ENCODE measurements at regions of chr1 and their contacts with region 1.

Region 1: GRCh38 chr1:117758444-117759316 is 152.8 kb downstream of the TENT5C start:
- DNase-seq: peak; percentile 85
- H3K4me3 ChIP-seq: peak overlapping the region; percentile 15 to 46 (median 42)
- H3K27ac ChIP-seq: no peak overlapping the region
- H3K4me1 ChIP-seq: peaks cover 0 to 18% (median 14%) of the 10 kb centered on the region in 4 donors
- H3K27me3 ChIP-seq: no peaks in the 10 kb centered on the region
- CTCF ChIP-seq: peak; percentile 51 to 87 (median 80)
- EP300 ChIP-seq: no peak
- POLR2A ChIP-seq: no peak

Region 2: GRCh38 chr1:117367047-117368018 is 391.3 kb before region 1 on chr1 and contains the start of gene MAN1A2:
- intact Hi-C with region 1: loop called (anchors 2 kb)
- DNase-seq: peak; percentile 95
- H3K4me3 ChIP-seq: peak within 1 kb of the TSS; percentile 79 to 88 (median 83)
- H3K27ac ChIP-seq: peak within 1 kb of the TSS; percentile 97 to 99 (median 98)
- H3K4me1 ChIP-seq: peaks cover 0 to 66% (median 54%) of the 10 kb centered on the region in 4 donors
- H3K27me3 ChIP-seq: no peaks in the 10 kb centered on the region
- CTCF ChIP-seq: no peak
- EP300 ChIP-seq: no peak
- POLR2A ChIP-seq: peak; percentile 65 to 82
- total RNA-seq, gene MAN1A2: 36.8 to 52.8 (median 43.4) TPM

Region 3: DNA sequence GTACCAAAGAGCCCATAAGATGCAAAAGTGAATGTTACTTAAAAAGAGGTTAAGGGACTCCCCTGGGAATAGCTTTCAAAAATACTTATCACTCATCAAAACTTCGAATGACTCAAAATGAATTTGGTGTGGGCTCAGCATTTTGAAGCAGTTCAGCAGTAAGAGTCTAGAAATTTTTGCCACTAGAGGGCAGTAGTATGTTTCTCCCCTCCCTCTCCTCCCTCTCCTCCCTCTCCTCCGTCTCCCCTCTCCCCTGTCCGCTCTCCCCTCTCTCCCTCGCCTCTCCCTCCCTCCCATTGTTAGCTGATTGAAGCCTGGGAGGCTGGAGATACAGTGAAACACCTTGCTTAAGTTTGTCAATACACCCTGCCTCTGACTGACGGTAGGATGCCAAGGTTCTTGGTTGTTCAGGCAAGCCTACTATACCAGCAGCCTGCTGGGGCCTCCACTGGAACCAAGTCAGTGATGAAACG is 223.6 kb before region 1 on chr1:
- intact Hi-C with region 1: loop called (anchors 1 kb)
- DNase-seq: no peak
- H3K4me3 ChIP-seq: no peak overlapping the region
- H3K27ac ChIP-seq: no peak overlapping the region
- H3K4me1 ChIP-seq: no peaks in the 10 kb centered on the region
- H3K27me3 ChIP-seq: no peaks in the 10 kb centered on the region
- CTCF ChIP-seq: peak; percentile 50 to 74 (median 70)
- EP300 ChIP-seq: no peak
- POLR2A ChIP-seq: no peak

Region 4: GRCh38 chr1:117674521-117675397 is 83.9 kb before region 1 on chr1:
- intact Hi-C with region 1: loop called (anchors 5 kb)
- DNase-seq: no peak
- H3K4me3 ChIP-seq: no peak overlapping the region
- H3K27ac ChIP-seq: no peak overlapping the region
- H3K4me1 ChIP-seq: peaks cover 2 to 28% (median 24%) of the 10 kb centered on the region in 4 donors
- H3K27me3 ChIP-seq: no peaks in the 10 kb centered on the region
- CTCF ChIP-seq: no peak
- EP300 ChIP-seq: no peak
- POLR2A ChIP-seq: no peak

Region 5: DNA sequence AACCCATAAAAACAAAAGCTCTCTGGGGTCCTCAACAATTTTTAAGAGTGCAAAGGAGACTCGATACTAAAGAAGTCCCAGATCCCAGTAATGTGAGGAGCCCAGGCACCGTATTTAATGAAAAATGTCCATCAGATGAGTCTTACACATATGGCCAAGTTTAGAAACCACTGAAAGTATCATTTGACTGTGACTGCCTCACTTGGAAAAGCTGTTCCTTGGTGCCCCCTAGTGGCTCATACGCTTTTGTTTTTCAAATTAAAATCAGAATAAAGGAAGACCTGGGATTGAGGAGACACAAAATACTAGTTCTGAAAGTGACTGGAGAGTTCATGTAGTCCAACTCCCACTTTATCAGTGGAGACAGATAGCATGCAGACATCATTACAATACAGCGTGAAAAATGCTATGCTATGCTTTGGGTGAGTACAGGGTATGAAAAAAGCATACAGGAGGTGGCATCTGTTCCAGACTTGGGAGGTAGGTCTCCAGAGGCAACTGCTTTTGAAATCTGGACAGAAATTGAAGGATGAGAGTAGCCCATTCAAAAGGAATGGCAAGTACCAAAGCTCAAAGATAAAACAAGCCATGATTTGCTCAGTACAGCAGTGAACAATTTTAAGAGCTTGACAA is 136.9 kb after region 1 on chr1:
- intact Hi-C with region 1: loop called (anchors 5 kb)
- DNase-seq: peak; percentile 74
- H3K4me3 ChIP-seq: no peak overlapping the region
- H3K27ac ChIP-seq: no peak overlapping the region
- H3K4me1 ChIP-seq: no peaks in the 10 kb centered on the region
- H3K27me3 ChIP-seq: no peaks in the 10 kb centered on the region
- CTCF ChIP-seq: peak; percentile 33 to 68 (median 62)
- EP300 ChIP-seq: no peak
- POLR2A ChIP-seq: no peak

Measured in sigmoid colon (tissue), 7 donors.